ENCODE measurements at regions of chr15 and their contacts with region 1.

Region 1: GRCh38 chr15:92881802-92882696 is 18.1 kb upstream of the CHD2 start:
- DNase-seq: peak; percentile 98 to 99 (median 99)
- ATAC-seq: peak; percentile 95 to 98 (median 96)
- H3K4me3 ChIP-seq: peak overlapping the region in 10 of 12 donors; percentile 39 to 98 (median 84)
- H3K27ac ChIP-seq: peak overlapping the region; percentile 91 to 100 (median 99)
- H3K4me1 ChIP-seq: peaks cover 0 to 49% (median 33%) of the 10 kb centered on the region in 12 donors
- H3K27me3 ChIP-seq: no peaks in the 10 kb centered on the region
- CTCF ChIP-seq: no peak
- POLR2A ChIP-seq: peak; percentile 91 to 95

Region 2: DNA sequence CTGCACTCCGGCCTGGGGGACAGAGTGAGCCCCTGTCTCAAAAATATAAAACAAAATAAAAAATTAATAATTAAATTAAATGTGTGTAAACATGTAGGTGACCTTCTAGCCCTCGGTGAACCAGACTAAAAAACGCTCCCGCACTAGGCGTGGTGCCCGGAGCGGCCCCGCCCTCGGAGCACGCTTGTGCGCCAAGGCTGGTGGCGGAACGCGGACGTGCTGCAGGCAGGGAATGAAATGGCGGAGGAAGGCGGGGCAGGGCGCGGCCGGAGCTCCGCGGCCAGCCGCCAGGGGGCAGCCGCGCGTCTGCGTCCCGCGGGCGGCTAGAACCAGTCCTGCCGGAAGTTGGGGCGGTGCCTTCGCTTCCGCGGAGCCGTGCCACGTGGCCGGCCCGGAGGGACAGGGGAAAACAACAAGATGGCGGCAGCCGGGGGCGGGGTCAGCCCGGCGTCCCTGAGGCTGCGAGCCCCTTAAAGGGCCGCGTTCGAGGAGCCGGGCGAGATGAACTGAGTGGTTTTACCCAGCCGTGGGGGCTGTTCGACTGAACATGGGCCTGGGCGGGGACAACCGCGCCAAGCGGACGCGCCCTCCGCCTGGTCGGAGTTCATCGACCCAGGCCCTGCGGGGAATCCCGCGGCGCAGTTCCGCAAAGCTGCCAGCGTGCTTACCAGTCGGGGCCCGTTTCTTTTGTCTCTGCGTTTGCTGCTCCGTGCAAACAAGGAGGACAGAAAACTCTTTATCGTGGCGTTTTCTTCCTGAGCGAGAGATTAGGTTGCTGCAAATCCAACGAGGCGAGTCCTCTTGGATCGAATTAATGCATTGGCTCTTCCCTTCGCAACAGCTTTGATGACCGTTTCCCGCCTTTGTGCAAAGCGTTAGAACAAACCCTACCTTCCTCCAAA is 72.8 kb before region 1 on chr15:
- intact Hi-C with region 1: loop called in 9 of 10 experiments (anchors 1 to 5 kb)
- DNase-seq: peak; percentile 98 to 99 (median 99)
- ATAC-seq: peak; percentile 88 to 95 (median 91)
- H3K4me3 ChIP-seq: peak overlapping the region; percentile 34 to 80 (median 61)
- H3K27ac ChIP-seq: peak overlapping the region; percentile 90 to 100 (median 98)
- H3K4me1 ChIP-seq: peaks cover 3 to 68% (median 19%) of the 10 kb centered on the region in 12 donors
- H3K27me3 ChIP-seq: no peaks in the 10 kb centered on the region
- CTCF ChIP-seq: peak; percentile 96 to 100 (median 99)
- POLR2A ChIP-seq: peak in 1 of 2 donors; percentile 75

Region 3: GRCh38 chr15:92819278-92820235 is 62.5 kb before region 1 on chr15:
- intact Hi-C with region 1: loop called in 2 of 10 experiments (anchors 5 kb)
- DNase-seq: no peak
- ATAC-seq: peak in 3 of 4 donors; percentile 25 to 40 (median 27)
- H3K4me3 ChIP-seq: peak overlapping the region in 11 of 12 donors; percentile 10 to 62 (median 48)
- H3K27ac ChIP-seq: peak overlapping the region; percentile 77 to 93 (median 86)
- H3K4me1 ChIP-seq: peaks cover 0 to 35% (median 12%) of the 10 kb centered on the region in 12 donors
- H3K27me3 ChIP-seq: no peaks in the 10 kb centered on the region
- CTCF ChIP-seq: no peak
- POLR2A ChIP-seq: no peak

Region 4: DNA sequence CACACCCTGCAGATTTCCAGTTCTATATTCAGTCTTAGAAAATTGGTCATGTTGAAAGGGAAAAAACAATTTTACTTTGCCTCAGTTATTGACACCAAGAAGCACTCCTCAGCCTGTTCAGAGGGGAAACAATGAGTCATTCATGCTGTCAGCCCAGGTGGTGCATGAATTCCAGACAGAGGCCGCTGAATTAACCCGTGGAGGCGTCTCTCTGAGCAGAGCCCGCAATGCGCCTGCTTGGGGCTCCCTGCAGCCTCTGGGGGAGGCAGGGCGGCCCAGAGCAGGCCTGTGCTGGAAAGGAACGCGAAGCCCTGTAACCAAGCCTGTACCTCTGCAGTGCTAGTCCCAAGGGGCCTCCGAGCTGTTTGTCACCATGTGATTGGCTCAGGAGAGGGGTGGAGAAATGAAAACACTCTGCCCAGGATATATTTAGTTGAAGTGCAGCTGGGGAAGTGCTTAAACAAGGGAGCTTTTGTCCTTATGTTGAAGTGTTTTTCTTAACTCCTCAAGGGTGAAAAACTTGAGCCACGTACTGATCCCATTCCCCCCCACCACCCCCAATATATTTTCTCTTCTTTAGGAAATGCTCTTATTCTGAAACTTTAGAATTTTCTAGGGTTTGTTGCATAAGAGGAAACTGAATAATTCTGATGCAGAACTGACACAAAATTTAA is 50.3 kb before region 1 on chr15:
- intact Hi-C with region 1: loop called (anchors 1 to 5 kb)
- DNase-seq: peak; percentile 94 to 99 (median 96)
- ATAC-seq: peak; percentile 98 to 99 (median 98)
- H3K4me3 ChIP-seq: peak overlapping the region in 11 of 12 donors; percentile 12 to 49 (median 37)
- H3K27ac ChIP-seq: peak overlapping the region; percentile 89 to 98 (median 95)
- H3K4me1 ChIP-seq: peaks cover 12 to 53% (median 33%) of the 10 kb centered on the region in 12 donors
- H3K27me3 ChIP-seq: no peaks in the 10 kb centered on the region
- CTCF ChIP-seq: no peak
- POLR2A ChIP-seq: peak; percentile 56 to 95

Region 5: DNA sequence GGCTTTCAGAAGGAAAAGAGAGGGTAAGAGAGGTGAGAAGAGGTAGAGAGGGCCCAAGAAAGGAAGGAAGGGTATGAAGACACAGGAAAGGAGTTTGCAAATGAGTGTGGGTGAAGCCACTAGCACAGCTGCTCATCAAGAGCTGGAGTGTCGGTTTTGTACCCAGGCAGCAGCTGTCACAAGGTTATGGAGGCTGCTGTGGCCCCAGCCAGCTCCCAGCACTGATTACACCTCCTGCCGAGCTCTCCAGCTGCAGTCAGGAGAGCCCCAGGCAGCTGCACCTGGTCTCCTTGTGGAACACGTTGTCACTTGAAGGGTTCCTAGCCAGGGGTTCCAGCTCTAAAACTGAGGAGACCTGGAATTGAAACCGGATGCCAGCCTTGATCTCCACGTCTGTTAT is 42.4 kb before region 1 on chr15:
- intact Hi-C with region 1: loop called in 6 of 10 experiments (anchors 1 to 5 kb)
- DNase-seq: no peak
- ATAC-seq: no peak
- H3K4me3 ChIP-seq: no peak overlapping the region
- H3K27ac ChIP-seq: peak overlapping the region in 1 of 12 donors; percentile 30
- H3K4me1 ChIP-seq: peaks cover 0 to 5% (median under 1%) of the 10 kb centered on the region in 12 donors
- H3K27me3 ChIP-seq: no peaks in the 10 kb centered on the region
- CTCF ChIP-seq: no peak
- POLR2A ChIP-seq: no peak

Region 6: DNA sequence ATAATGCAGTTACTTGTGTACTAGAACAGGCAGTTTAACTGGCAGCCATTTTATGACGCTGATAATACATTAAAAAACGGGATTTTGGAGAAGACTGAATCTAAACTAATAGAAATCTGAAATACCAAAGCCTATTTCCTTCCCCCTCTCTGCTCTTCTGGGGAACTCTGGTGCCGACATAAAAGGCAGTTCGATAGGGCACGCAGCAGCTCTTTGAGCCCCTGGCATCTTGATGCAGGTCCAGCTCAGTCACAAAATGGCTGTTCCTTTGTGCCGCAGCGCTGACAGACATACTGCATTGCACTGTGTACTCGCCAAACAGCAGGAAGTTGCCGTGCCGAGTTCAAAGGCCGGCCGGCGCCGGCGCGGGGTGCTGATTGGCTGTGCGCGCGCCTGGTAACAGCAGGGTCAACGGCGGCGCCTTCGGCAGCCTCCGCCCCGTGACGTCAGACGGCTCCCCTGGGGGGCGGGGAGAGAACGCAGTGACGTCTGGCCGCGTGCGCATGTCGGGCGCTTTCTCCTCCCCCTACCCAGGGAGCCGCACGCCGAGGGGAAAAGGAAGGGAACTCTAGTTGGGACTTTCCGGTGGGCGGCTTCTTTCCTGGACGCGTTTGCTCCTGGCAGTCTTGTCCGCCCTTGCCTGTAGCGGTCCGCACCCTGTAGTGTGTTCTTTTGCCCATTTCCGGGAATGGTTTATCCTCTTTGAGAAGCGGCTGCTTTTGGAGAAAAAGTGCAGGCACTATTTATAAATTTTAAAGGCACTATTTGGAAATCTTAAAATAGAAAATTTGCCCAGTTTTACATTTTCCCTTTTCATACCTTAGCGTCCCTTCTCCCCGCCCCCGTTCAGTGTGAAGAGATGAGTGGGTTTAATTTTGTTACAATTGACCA is 22.1 kb after region 1 on chr15:
- intact Hi-C with region 1: loop called in 6 of 10 experiments (anchors 1 to 2 kb)
- DNase-seq: peak; percentile 99 to 100 (median 99)
- ATAC-seq: peak; percentile 92 to 96 (median 94)
- H3K4me3 ChIP-seq: peak overlapping the region; percentile 32 to 75 (median 63)
- H3K27ac ChIP-seq: peak overlapping the region; percentile 92 to 99 (median 94)
- H3K4me1 ChIP-seq: peaks cover 19 to 77% (median 57%) of the 10 kb centered on the region in 12 donors
- H3K27me3 ChIP-seq: no peaks in the 10 kb centered on the region
- CTCF ChIP-seq: no peak
- POLR2A ChIP-seq: peak in 1 of 2 donors; percentile 92

Region 7: GRCh38 chr15:92917606-92918407 is 35.8 kb after region 1 on chr15:
- intact Hi-C with region 1: loop called in 2 of 10 experiments (anchors 1 to 5 kb)
- DNase-seq: peak; percentile 90 to 95 (median 94)
- ATAC-seq: peak; percentile 40 to 74 (median 68)
- H3K4me3 ChIP-seq: peak overlapping the region in 7 of 12 donors; percentile 2 to 48 (median 24)
- H3K27ac ChIP-seq: peak overlapping the region; percentile 69 to 99 (median 84)
- H3K4me1 ChIP-seq: peaks cover 3 to 100% (median 79%) of the 10 kb centered on the region in 12 donors
- H3K27me3 ChIP-seq: no peaks in the 10 kb centered on the region
- CTCF ChIP-seq: peak; percentile 87 to 96 (median 92)
- POLR2A ChIP-seq: peak in 1 of 2 donors; percentile 32

Measured in heart left ventricle (tissue), 16 donors.